Caco-2 (cell line): ENCODE measurements at regions of chr11 and their contacts with region 1.

Region 1: GRCh38 chr11:78188286-78189173 is at the starts of genes KCTD21 and USP35:
- DNase-seq: peak; percentile 99 to 100
- H3K4me3 ChIP-seq: peak within 1 kb of the TSS; percentile 82
- H3K4me3 Mint-ChIP-seq: peak within 1 kb of the TSS; percentile 98
- H3K27ac Mint-ChIP-seq: peak within 1 kb of the TSS; percentile 84
- H3K4me1 ChIP-seq: peaks cover 28% of the 10 kb centered on the region
- H3K4me1 Mint-ChIP-seq: peaks cover 37% of the 10 kb centered on the region
- H3K27me3 ChIP-seq: no peaks in the 10 kb centered on the region
- H3K27me3 Mint-ChIP-seq: no peaks in the 10 kb centered on the region
- CTCF ChIP-seq: no peak
- total RNA-seq, gene KCTD21: 6.4 and 10.4 TPM in 2 replicates
- total RNA-seq, gene USP35: 10.7 and 11.3 TPM in 2 replicates

Region 2: GRCh38 chr11:78079232-78080083 is 109.1 kb before region 1 on chr11 and contains the start of gene NDUFC2:
- CTCF ChIA-PET with region 1: no interaction called
- POLR2A ChIA-PET with region 1: no interaction called
- intact Hi-C with region 1: loop called (anchors 5 kb)
- DNase-seq: peak; percentile 87
- H3K4me3 ChIP-seq: peak within 1 kb of the TSS; percentile 73
- H3K4me3 Mint-ChIP-seq: peak within 1 kb of the TSS; percentile 76
- H3K27ac Mint-ChIP-seq: peak within 1 kb of the TSS; percentile 52
- H3K4me1 ChIP-seq: peaks cover 49% of the 10 kb centered on the region
- H3K4me1 Mint-ChIP-seq: peaks cover 37% of the 10 kb centered on the region
- H3K27me3 ChIP-seq: no peaks in the 10 kb centered on the region
- H3K27me3 Mint-ChIP-seq: no peaks in the 10 kb centered on the region
- CTCF ChIP-seq: no peak
- total RNA-seq, gene NDUFC2: 732 and 805 TPM in 2 replicates

Region 3: DNA sequence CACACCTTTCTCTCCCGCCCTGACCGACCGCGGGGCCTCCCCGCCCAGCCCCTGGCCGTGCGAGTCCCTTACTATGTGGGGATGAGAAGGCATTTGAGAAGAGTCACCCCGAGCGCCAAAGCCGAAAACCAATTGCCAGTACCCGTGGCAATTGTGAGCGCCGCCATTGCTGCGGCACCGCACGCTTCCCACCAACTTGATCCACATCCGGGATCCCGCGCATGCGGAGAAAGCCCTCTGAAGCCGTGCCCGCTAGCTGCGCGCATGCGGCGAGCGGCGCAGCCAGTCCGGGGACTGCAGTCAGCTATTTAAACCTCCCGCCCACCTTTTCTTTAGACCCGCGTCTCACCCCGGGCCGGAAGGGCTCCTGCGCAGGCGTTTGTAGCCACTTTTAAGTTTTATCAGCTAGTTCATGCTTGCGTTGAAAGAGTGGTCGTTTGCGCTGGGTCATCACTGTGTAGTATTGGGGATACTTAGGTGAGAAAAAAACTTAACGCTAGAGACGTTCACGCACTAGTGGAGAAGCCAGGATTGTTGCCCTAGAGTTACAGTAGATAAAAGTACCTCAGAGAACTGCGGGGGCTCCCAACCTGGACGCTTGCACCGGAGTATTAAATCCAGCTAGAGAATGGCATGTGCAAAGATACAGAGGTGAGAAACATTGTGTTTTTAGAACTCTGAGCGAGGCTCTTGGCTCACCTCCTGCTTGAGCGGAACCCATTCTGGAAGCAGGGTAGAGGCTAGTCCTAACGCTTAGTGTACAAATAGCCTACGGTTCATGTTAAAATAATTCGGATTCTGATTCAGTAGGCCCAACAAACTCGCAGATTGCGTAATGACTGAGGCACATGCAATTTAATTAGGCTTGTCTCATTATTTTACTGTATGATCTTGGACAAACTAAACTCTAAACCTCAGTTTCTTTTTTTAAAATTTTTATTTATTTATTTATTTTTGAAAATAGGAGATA is 48.8 kb before region 1 on chr11 and contains the start of gene ALG8:
- CTCF ChIA-PET with region 1: interaction called, 4 read pairs
- POLR2A ChIA-PET with region 1: interaction called, 32 read pairs
- intact Hi-C with region 1: loop called (anchors 1 kb)
- DNase-seq: peak; percentile 99
- H3K4me3 ChIP-seq: peak within 1 kb of the TSS; percentile 49
- H3K4me3 Mint-ChIP-seq: peak within 1 kb of the TSS; percentile 90
- H3K27ac Mint-ChIP-seq: peak within 1 kb of the TSS; percentile 83
- H3K4me1 ChIP-seq: peaks cover 5% of the 10 kb centered on the region
- H3K4me1 Mint-ChIP-seq: peaks cover 21% of the 10 kb centered on the region
- H3K27me3 ChIP-seq: no peaks in the 10 kb centered on the region
- H3K27me3 Mint-ChIP-seq: no peaks in the 10 kb centered on the region
- CTCF ChIP-seq: no peak
- total RNA-seq, gene ALG8: 188 and 191 TPM in 2 replicates

Region 4: GRCh38 chr11:78149646-78150045 is 38.9 kb before region 1 on chr11:
- CTCF ChIA-PET with region 1: interaction called, 6 read pairs
- POLR2A ChIA-PET with region 1: no interaction called
- intact Hi-C with region 1: loop called (anchors 1 kb)
- DNase-seq: peak in 1 of 2 experiments; percentile 31
- H3K4me3 ChIP-seq: no peak overlapping the region
- H3K4me3 Mint-ChIP-seq: no peak overlapping the region
- H3K27ac Mint-ChIP-seq: no peak overlapping the region
- H3K4me1 ChIP-seq: peaks cover 19% of the 10 kb centered on the region
- H3K4me1 Mint-ChIP-seq: peaks cover 16% of the 10 kb centered on the region
- H3K27me3 ChIP-seq: no peaks in the 10 kb centered on the region
- H3K27me3 Mint-ChIP-seq: no peaks in the 10 kb centered on the region
- CTCF ChIP-seq: peak in 1 of 2 experiments; percentile 15

Region 5: GRCh38 chr11:78338138-78338537 is 149.6 kb after region 1 on chr11:
- CTCF ChIA-PET with region 1: no interaction called
- POLR2A ChIA-PET with region 1: interaction called, 12 read pairs
- intact Hi-C with region 1: no loop called
- DNase-seq: no peak
- H3K4me3 ChIP-seq: no peak overlapping the region
- H3K4me3 Mint-ChIP-seq: no peak overlapping the region
- H3K27ac Mint-ChIP-seq: no peak overlapping the region
- H3K4me1 ChIP-seq: peaks cover 29% of the 10 kb centered on the region
- H3K4me1 Mint-ChIP-seq: peaks cover 41% of the 10 kb centered on the region
- H3K27me3 ChIP-seq: no peaks in the 10 kb centered on the region
- H3K27me3 Mint-ChIP-seq: no peaks in the 10 kb centered on the region
- CTCF ChIP-seq: no peak

Region 6: DNA sequence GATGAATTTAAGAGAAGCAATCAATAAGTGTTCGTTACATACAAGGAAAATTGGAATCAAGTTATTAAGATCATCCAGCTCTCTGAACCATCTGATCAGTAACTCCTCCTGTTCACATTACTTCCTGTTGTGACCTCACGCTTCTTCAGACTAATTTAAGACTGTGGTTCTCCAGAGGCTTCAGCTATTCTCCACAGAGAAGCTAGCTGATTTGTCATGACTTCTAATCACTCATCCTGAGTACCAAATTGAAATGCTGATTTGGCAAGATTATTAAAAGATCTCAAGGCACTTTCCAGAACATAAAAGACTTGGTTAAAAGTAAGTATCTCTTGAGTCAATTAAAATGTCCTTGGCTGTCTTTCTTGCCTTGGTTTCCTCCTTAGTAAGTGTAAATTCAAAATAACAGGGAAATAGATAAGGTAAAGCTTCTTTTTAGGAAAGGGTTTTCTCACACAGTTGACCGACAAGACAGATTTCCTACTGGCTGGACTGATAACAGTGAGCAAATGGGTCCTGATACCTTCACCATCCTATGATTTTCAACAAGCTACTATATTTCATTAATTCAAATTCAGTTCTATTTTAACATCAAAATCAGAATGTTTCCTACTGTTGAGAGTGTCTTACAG is 190.6 kb after region 1 on chr11:
- CTCF ChIA-PET with region 1: no interaction called
- POLR2A ChIA-PET with region 1: no interaction called
- intact Hi-C with region 1: loop called (anchors 5 kb)
- DNase-seq: no peak
- H3K4me3 ChIP-seq: no peak overlapping the region
- H3K4me3 Mint-ChIP-seq: peak overlapping the region; percentile 64
- H3K27ac Mint-ChIP-seq: peak overlapping the region; percentile 93
- H3K4me1 ChIP-seq: peaks cover 75% of the 10 kb centered on the region
- H3K4me1 Mint-ChIP-seq: peaks cover 60% of the 10 kb centered on the region
- H3K27me3 ChIP-seq: no peaks in the 10 kb centered on the region
- H3K27me3 Mint-ChIP-seq: no peaks in the 10 kb centered on the region
- CTCF ChIP-seq: no peak

Region 7: GRCh38 chr11:78489184-78489583 is 300.7 kb after region 1 on chr11:
- CTCF ChIA-PET with region 1: no interaction called
- POLR2A ChIA-PET with region 1: no interaction called
- intact Hi-C with region 1: no loop called
- DNase-seq: no peak
- H3K4me3 ChIP-seq: no peak overlapping the region
- H3K4me3 Mint-ChIP-seq: no peak overlapping the region
- H3K27ac Mint-ChIP-seq: no peak overlapping the region
- H3K4me1 ChIP-seq: no peaks in the 10 kb centered on the region
- H3K4me1 Mint-ChIP-seq: no peaks in the 10 kb centered on the region
- H3K27me3 ChIP-seq: no peaks in the 10 kb centered on the region
- H3K27me3 Mint-ChIP-seq: no peaks in the 10 kb centered on the region
- CTCF ChIP-seq: no peak